Posterior cingulate gyrus (tissue), 11 donors: ENCODE measurements at regions of chr1 and their contacts with region 1.

Region 1: GRCh38 chr1:211133836-211134669 is at the start of gene KCNH1:
- DNase-seq: peak; percentile 84 to 99 (median 92)

Region 2: GRCh38 chr1:210407207-210407886 is 726.7 kb before region 1 on chr1:
- intact Hi-C with region 1: loop called (anchors 1 kb)
- DNase-seq: peak; percentile 66 to 97 (median 86)

Region 3: DNA sequence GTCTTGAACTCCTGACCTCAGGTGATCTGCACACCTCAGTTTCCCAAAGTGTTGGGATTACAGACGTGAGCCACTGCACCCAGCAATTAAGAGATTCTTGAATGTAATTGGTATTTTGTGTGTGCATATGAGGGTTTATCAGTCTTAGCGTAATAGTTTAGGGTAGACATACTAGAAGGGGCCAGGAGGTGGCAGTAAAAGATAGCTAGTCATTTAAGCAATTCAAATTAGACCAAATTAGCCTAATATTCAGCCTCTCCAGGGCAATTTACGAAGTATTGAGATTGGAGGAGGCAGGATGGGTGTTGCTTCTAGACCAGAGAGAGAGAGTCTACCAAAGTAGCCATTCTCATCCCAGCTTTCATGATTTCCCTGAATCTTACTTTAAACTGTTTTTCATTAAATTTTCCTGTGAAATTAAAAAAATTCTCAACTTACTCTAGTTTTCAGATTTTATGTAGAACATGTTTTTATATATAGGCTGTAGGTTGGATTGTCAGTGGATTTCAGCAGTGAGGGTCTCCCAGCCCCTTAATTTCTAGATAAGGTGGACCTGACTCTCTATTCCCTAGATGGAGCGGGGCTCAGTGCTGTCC is 685.7 kb before region 1 on chr1:
- intact Hi-C with region 1: loop called (anchors 1 kb)
- DNase-seq: peak in 1 of 10 donors; percentile 35

Region 4: DNA sequence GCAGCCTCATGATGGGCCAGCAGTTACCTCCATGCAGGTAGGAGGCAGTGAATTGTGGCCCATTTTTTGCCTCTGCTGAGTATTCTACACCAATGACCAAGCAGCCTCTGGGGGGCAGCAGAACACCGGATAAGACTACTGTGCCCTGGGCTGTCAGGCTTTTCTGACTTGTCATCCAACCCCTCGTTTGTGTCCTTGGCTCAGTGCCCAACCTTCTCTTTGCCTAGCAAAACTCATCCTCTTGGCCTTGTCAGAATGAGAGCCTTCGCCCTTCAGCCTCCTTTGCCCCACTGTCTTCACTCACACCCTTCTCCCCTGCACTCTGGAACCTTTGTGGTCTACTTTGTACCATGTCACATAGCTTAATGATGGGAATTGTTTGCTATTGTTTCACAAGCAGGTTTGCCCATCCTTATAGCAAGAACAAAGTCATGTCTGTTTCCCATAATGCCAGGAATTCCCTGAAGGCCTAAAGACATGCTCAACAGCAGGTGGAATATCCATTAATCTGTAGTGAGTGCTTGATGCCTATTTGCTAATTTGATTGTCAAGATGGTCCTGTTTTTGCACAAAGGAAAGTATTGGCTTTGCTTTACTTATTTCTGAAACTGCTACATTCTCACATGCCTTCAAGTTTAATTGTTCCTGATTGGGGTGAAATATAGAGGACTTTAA is 549.5 kb before region 1 on chr1:
- intact Hi-C with region 1: loop called (anchors 1 kb)
- DNase-seq: peak; percentile 77 to 98 (median 93)

Region 5: DNA sequence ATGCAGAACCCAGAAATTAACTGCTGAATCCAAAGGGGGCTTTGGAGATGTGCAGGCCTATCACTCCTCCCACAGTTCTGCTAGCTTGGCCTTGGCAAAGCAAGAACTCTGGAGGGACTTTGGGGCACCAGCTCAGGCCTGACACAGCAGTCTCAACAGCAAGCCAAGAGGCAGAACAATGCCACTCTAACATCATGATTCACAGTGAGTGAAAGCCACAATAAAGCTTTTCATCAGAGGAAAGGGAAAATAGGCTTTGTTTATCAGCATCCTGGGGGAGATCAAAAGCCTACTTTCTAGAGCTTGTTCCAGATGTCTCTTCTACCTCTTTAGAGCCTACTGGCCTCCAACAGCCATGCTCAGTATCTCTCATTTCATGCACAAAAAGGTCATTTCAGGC is 283.5 kb before region 1 on chr1:
- intact Hi-C with region 1: loop called (anchors 10 kb)
- DNase-seq: peak; percentile 44 to 95 (median 68)

Region 6: GRCh38 chr1:211258756-211259637 is 124.9 kb after region 1 on chr1 and contains the start of gene RCOR3:
- intact Hi-C with region 1: loop called (anchors 10 kb)
- DNase-seq: peak; percentile 85 to 99 (median 90)